Gastrocnemius medialis (tissue), 4 donors: ENCODE measurements at regions of chr14 and their contacts with region 1.

Region 1: DNA sequence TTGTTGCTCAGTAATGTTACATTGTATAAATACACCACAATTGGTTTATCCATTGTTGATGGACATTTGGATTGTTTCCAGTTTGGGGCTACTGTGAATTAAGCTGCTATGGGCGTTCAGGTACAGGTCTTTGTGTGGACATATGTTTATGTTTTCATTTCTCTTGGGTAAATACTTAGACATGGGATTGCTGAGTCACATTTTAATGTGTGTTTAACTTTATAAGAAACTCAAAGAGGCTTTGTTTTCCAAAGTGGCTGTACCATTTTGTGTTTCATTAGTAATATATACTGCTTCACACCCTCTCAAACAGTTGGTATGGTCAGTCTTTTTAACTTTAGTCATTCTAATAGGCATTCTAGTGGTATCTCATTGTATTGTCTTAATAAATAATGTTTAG is 225.0 kb downstream of the SPTSSA start:
- DNase-seq: no peak
- ATAC-seq: no peak
- H3K4me3 ChIP-seq: no peak overlapping the region
- H3K27ac ChIP-seq: peak overlapping the region in 1 of 4 donors; percentile 79
- H3K4me1 ChIP-seq: peaks cover 38 to 42% of the 10 kb centered on the region in 2 donors
- H3K27me3 ChIP-seq: no peaks in the 10 kb centered on the region
- CTCF ChIP-seq: no peak
- POLR2A ChIP-seq: no peak

Region 2: GRCh38 chr14:33859306-33859705 is 377.8 kb before region 1 on chr14:
- in situ Hi-C with region 1: loop called in 1 of 4 experiments (anchors 10 kb)
- intact Hi-C with region 1: no loop called
- DNase-seq: no peak
- ATAC-seq: no peak
- H3K4me3 ChIP-seq: no peak overlapping the region
- H3K27ac ChIP-seq: no peak overlapping the region
- H3K4me1 ChIP-seq: no peaks in the 10 kb centered on the region
- H3K27me3 ChIP-seq: no peaks in the 10 kb centered on the region
- CTCF ChIP-seq: no peak
- POLR2A ChIP-seq: no peak

Region 3: DNA sequence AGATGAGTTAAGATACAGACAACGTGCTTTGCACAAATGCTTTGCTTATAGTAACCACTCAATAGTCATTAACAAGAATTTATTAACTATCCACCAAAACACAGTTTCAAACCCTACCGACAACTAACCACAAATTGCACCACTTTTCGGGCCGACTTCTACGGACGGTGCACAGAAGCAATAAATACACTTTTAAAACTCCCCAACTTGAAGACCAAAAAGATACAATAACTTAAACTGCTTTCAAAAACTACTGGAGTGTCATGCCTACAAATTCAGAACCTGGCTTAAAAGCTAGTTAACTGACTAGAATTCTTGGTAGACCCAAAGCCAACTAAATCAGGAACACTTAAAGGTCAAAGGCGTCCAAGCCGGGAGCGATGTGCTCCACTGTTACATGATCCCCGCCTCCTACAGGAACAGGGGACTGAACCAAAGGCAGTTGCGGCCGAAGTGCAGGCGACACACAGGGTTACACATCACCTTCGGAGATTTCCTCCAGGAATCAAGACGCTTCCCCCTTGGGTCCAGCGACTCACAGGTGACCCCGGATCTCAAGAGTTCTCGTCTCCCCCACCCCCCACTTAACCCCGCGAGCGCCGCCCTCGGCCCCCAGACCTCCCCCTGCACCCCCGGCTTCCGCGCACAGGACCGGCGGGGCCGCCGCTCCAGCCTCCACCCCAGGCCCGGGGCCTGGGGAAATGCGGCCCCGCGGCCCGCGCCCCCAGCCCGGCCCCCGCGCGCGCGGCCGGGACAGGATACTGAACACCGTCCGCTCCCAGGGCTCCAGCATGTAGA is 224.5 kb after region 1 on chr14:
- in situ Hi-C with region 1: no loop called
- intact Hi-C with region 1: loop called (anchors 5 kb)
- DNase-seq: peak; percentile 37 to 66
- ATAC-seq: peak; percentile 73 to 78
- H3K4me3 ChIP-seq: peak overlapping the region; percentile 53 to 73 (median 62)
- H3K27ac ChIP-seq: peak overlapping the region; percentile 89 to 91 (median 90)
- H3K4me1 ChIP-seq: peaks cover 12 to 21% of the 10 kb centered on the region in 2 donors
- H3K27me3 ChIP-seq: no peaks in the 10 kb centered on the region
- CTCF ChIP-seq: no peak
- POLR2A ChIP-seq: no peak